ENCODE measurements at regions of chr9 and their contacts with region 1.

Region 1: DNA sequence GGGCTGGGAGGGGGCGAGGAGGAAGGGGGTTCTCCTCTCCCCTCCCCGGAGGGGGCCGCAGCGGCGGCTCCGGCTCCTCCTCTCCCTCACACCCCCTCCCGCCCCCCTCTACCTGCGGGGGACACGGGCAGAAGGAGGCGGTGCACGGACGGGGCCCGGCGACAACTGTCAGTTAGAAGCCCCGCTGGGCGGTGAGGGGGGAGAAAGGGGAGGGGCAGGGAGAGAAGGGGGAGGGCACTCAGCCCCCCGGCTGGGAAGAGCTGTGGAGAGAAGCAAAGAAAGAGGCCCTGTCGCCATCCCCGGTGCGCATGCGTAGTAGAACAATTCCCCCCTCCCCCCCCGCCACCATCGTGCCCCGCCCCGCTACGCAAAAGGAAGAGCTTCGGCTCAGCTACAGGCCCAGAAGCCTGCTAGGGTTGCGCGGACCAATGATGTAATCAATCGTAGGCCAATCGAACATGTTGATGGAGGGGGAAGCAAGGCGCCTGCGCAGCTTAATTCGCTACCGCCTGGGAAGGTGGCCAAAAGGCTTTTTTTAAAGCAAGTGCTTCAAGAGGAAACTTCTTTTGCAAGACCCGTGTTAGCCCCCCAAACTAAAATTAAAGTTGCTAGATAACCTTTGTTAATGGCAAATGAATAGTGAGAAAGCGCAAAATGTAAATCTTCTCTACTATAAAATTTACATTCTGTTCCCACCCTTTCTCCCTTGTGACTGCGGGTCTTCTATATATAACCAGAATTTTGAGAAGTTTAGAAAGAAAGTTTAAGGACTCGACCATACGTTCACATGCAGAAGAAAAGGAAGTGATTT is 7.0 kb downstream of the RANBP6 start:
- DNase-seq: peak; percentile 88
- ATAC-seq: peak; percentile 74
- H3K4me3 ChIP-seq: peak overlapping the region; percentile 82
- H3K27ac ChIP-seq: peak overlapping the region; percentile 66
- H3K4me1 ChIP-seq: peaks cover 12% of the 10 kb centered on the region
- H3K27me3 ChIP-seq: no peaks in the 10 kb centered on the region
- CTCF ChIP-seq: no peak
- EP300 ChIP-seq: no peak
- POLR2A ChIP-seq: peak; percentile 55
- RAD21 ChIP-seq: no peak

Region 2: DNA sequence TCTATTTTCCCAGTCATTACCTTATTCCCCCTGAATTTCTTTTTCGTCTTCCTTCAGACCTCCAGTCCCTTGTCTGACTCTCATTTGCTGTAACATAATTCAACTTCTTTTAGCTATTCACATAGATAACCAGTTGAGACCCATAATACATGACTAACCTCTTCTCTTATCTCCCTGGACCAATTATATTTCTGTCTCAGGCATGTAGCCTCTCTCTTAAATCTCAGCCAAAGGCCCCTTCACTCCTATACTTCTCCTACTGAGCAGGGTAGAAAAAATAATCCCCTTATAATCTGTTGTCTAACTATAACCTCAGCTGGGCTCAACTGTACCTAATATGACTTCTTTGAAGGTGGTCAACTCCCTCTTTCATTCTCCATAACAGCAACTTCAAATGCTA is 13.9 kb before region 1 on chr9:
- CTCF ChIA-PET with region 1: no interaction called
- POLR2A ChIA-PET with region 1: interaction called, 15 read pairs
- RAD21 ChIA-PET with region 1: interaction called, 10 read pairs
- SMC1A ChIA-PET with region 1: interaction called, 9 read pairs
- in situ Hi-C with region 1: no loop called
- intact Hi-C with region 1: no loop called
- DNase-seq: no peak
- ATAC-seq: no peak
- H3K4me3 ChIP-seq: no peak overlapping the region
- H3K27ac ChIP-seq: no peak overlapping the region
- H3K4me1 ChIP-seq: no peaks in the 10 kb centered on the region; the same call in 1 of the 2 replicates
- H3K27me3 ChIP-seq: no peaks in the 10 kb centered on the region
- CTCF ChIP-seq: no peak
- EP300 ChIP-seq: no peak
- POLR2A ChIP-seq: no peak
- RAD21 ChIP-seq: no peak

Region 3: GRCh38 chr9:6024020-6024554 is 15.7 kb after region 1 on chr9:
- CTCF ChIA-PET with region 1: interaction called, 14 read pairs
- POLR2A ChIA-PET with region 1: interaction called, 3 read pairs
- RAD21 ChIA-PET with region 1: no interaction called
- SMC1A ChIA-PET with region 1: interaction called, 6 read pairs
- in situ Hi-C with region 1: no loop called
- intact Hi-C with region 1: no loop called
- DNase-seq: no peak
- ATAC-seq: peak; percentile 99
- H3K4me3 ChIP-seq: no peak overlapping the region
- H3K27ac ChIP-seq: no peak overlapping the region
- H3K4me1 ChIP-seq: no peaks in the 10 kb centered on the region
- H3K27me3 ChIP-seq: no peaks in the 10 kb centered on the region; a peak in 1 of 4 replicates
- CTCF ChIP-seq: peak; percentile 28 to 69 (median 61); a peak in 5 of 6 replicates
- EP300 ChIP-seq: no peak
- POLR2A ChIP-seq: no peak
- RAD21 ChIP-seq: no peak